HepG2 (cell line): ENCODE measurements at regions of chr9 and their contacts with region 1.

Region 1: DNA sequence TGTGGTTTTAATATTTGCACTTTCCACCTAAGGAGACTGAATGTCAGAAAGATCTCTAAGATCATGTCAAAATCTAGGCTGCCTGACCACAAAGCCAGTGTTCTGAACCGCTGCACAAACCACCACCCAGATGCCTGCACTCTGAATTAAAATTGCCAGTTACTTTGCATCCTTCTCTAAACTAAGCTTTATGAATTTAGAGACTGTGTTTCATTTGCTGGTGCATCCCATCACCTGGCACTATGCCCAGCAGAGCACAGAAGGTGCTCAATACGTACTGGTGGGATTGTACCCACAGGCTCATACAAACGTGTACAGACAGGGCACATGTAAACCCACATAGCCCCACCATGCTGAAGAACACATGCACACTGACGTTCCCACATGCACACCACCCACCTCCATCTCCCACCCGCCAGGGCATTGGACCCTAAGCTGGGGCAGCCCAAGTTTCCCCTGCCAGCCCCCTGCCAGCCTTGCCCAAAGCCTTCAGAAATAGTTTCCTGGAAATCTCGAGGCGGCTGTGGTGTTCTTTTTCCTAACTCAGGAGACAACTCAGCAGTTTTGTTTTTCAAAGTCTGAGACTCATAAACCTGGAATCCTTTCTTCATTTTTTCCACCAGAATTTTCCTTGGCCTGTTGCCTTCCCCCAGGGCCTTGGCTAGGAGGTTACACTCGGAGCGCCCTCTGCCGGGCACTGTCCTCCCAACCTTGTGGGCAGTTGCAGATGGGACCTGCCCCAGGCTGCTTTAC is 9.6 kb upstream of the TRAF1 start:
- DNase-seq: peak; percentile 65
- ATAC-seq: peak; percentile 95
- H3K4me3 ChIP-seq: no peak overlapping the region
- H3K27ac ChIP-seq: no peak overlapping the region
- H3K4me1 ChIP-seq: peaks cover 20% of the 10 kb centered on the region
- H3K27me3 ChIP-seq: no peaks in the 10 kb centered on the region
- CTCF ChIP-seq: peak; percentile 93
- EP300 ChIP-seq: no peak
- POLR2A ChIP-seq: no peak
- RAD21 ChIP-seq: peak; percentile 79

Region 2: GRCh38 chr9:120692901-120693699 is 243.1 kb before region 1 on chr9:
- CTCF ChIA-PET with region 1: no interaction called
- POLR2A ChIA-PET with region 1: no interaction called
- in situ Hi-C with region 1: no loop called
- intact Hi-C with region 1: no loop called
- DNase-seq: no peak
- ATAC-seq: no peak
- H3K4me3 ChIP-seq: no peak overlapping the region
- H3K27ac ChIP-seq: no peak overlapping the region
- H3K4me1 ChIP-seq: peaks cover 38% of the 10 kb centered on the region
- H3K27me3 ChIP-seq: no peaks in the 10 kb centered on the region
- CTCF ChIP-seq: no peak
- EP300 ChIP-seq: no peak
- POLR2A ChIP-seq: no peak
- RAD21 ChIP-seq: no peak

Region 3: DNA sequence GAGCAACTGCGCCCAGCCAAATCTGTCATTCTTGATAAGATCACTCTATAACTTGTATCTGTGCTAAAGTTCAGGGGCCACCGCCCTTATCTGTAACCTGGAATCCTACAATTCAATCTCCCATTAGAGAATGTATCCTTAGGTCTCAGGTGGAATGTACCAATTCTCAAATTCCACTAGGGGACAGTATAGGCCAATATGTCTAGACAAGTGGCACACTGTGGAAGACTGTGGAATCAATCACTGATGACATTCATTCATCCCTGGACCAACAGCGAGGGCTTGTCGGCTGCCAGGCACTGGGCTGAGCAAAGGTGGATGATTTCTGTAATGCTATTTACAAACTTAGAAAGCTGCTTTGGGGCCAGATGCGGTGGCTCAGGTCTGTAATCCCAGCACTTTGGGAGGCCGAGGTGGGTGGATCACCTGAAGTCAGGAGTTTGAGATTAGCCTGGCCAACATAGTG is 193.2 kb before region 1 on chr9:
- CTCF ChIA-PET with region 1: interaction called, 11 read pairs
- POLR2A ChIA-PET with region 1: no interaction called
- in situ Hi-C with region 1: no loop called
- intact Hi-C with region 1: loop called (anchors 5 kb)
- DNase-seq: peak; percentile 70
- ATAC-seq: peak; percentile 96
- H3K4me3 ChIP-seq: no peak overlapping the region
- H3K27ac ChIP-seq: no peak overlapping the region
- H3K4me1 ChIP-seq: peaks cover 7% of the 10 kb centered on the region
- H3K27me3 ChIP-seq: no peaks in the 10 kb centered on the region
- CTCF ChIP-seq: peak; percentile 86
- EP300 ChIP-seq: no peak
- POLR2A ChIP-seq: no peak
- RAD21 ChIP-seq: peak; percentile 82

Region 4: DNA sequence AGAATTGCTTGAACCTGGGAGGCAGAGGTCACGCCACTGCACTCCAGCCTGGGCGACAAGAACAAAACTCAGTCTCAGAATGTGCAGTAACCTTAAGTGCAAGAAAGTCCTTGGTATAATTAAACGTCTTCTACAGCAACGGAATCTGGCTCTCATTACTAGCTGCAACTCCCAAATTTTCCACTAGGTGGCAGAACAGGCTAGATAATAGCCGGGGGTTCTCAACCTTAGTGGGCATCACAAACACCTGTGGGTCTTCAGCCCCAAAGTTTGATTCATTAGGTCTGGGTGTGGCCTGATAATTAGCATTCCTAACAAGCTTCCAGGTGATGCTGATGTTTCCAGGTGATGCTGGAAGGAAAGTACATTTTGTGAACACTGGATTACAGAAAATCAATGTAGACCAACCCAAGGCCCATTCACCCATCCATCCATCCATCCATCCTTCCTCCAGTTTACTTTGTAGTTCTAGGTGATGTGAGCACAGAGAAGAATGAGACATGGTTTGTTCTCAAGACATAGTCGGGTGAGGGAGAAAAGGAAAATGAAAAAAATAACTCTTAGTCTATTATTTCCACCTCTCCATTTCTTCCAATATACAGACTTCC is 180.3 kb before region 1 on chr9:
- CTCF ChIA-PET with region 1: interaction called, 40 read pairs
- POLR2A ChIA-PET with region 1: interaction called, 4 read pairs
- in situ Hi-C with region 1: loop called (anchors 5 kb)
- intact Hi-C with region 1: loop called (anchors 1 kb)
- DNase-seq: peak; percentile 39
- ATAC-seq: peak; percentile 79
- H3K4me3 ChIP-seq: no peak overlapping the region
- H3K27ac ChIP-seq: no peak overlapping the region
- H3K4me1 ChIP-seq: no peaks in the 10 kb centered on the region
- H3K27me3 ChIP-seq: no peaks in the 10 kb centered on the region
- CTCF ChIP-seq: peak; percentile 90
- EP300 ChIP-seq: no peak
- POLR2A ChIP-seq: no peak
- RAD21 ChIP-seq: peak; percentile 90

Region 5: DNA sequence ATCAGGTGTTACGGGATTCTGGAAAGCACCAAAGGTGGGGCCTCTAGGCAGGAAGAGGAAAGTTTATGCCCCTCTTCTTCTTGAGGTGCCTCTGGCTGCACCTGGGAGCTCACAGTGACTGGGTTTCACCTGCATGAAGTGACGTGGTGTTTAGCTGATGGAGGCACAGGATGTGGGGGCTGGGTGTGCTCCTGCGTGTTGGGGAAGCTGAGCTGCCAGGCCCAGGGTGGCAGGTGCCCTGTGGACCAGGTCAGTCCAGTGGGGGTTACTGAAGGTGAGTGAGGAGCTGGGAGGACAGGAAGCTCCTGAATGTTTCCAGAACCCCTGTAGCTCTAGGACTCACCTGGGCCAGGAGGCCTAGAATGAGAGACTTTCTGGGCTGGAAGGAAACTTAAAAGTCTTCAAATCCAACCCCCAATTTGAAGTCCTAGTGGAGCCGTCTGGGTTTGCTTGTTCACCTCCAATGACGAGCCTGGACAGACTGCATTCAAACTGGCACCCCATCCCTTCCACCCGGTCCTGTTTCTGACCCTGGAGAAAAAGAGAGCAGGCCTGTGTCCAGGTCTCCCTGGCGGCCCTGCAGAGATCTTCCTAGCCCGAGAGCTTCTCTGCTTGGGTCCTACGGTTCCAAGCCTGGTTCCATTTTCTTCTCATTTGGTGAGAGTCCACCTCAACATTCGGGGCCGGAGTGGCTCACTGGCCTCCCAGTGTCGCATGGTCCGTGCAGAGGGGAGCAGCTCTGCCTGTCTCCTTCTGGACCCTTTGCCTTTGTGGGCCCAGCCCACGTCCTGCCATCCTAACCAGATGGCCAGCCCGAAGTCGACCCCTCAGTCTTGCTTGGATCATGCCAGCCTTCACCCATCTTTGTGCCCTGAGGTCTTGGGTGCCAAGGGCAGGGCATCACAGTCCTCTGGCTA is 31.9 kb before region 1 on chr9:
- CTCF ChIA-PET with region 1: no interaction called
- POLR2A ChIA-PET with region 1: no interaction called
- in situ Hi-C with region 1: no loop called
- intact Hi-C with region 1: no loop called
- DNase-seq: no peak
- ATAC-seq: no peak; the same call in 2 of the 3 replicates
- H3K4me3 ChIP-seq: no peak overlapping the region
- H3K27ac ChIP-seq: no peak overlapping the region
- H3K4me1 ChIP-seq: no peaks in the 10 kb centered on the region
- H3K27me3 ChIP-seq: peaks cover 0 to 18% of the 10 kb centered on the region in 2 experiments; a peak in 2 of 5 replicates
- CTCF ChIP-seq: no peak
- EP300 ChIP-seq: no peak
- POLR2A ChIP-seq: no peak
- RAD21 ChIP-seq: no peak

Region 6: GRCh38 chr9:121179930-121180681 is 243.9 kb after region 1 on chr9:
- CTCF ChIA-PET with region 1: no interaction called
- POLR2A ChIA-PET with region 1: no interaction called
- in situ Hi-C with region 1: no loop called
- intact Hi-C with region 1: no loop called
- DNase-seq: no peak
- ATAC-seq: no peak
- H3K4me3 ChIP-seq: no peak overlapping the region
- H3K27ac ChIP-seq: peak overlapping the region; percentile 31
- H3K4me1 ChIP-seq: peaks cover 74% of the 10 kb centered on the region
- H3K27me3 ChIP-seq: no peaks in the 10 kb centered on the region
- CTCF ChIP-seq: no peak
- EP300 ChIP-seq: no peak
- POLR2A ChIP-seq: no peak
- RAD21 ChIP-seq: no peak